Transverse colon (tissue), 4 donors: ENCODE measurements at regions of chr10 and their contacts with region 1.

Region 1: GRCh38 chr10:49612513-49613164 is 1.2 kb upstream of the CHAT start:
- DNase-seq: no peak
- H3K4me3 ChIP-seq: no peak overlapping the region
- H3K27ac ChIP-seq: no peak overlapping the region
- H3K4me1 ChIP-seq: peaks cover 0 to 19% (median 9%) of the 10 kb centered on the region in 4 donors
- H3K27me3 ChIP-seq: peaks cover 99% of the 10 kb centered on the region
- CTCF ChIP-seq: no peak
- EP300 ChIP-seq: no peak
- POLR2A ChIP-seq: no peak

Region 2: GRCh38 chr10:48266528-48266927 is 1346.1 kb before region 1 on chr10:
- in situ Hi-C with region 1: no loop called
- intact Hi-C with region 1: loop called (anchors 10 kb)
- DNase-seq: no peak
- H3K4me3 ChIP-seq: no peak overlapping the region
- H3K27ac ChIP-seq: no peak overlapping the region
- H3K4me1 ChIP-seq: no peaks in the 10 kb centered on the region
- H3K27me3 ChIP-seq: no peaks in the 10 kb centered on the region
- CTCF ChIP-seq: no peak
- EP300 ChIP-seq: no peak
- POLR2A ChIP-seq: no peak